ENCODE measurements at regions of chr16 and their contacts with region 1.

Region 1: GRCh38 chr16:87636072-87636684 is 33.9 kb downstream of the JPH3 start:
- DNase-seq: peak; percentile 65 to 67
- H3K4me3 ChIP-seq: no peak overlapping the region
- H3K27ac ChIP-seq: no peak overlapping the region
- H3K4me1 ChIP-seq: peaks cover 0 to 6% of the 10 kb centered on the region in 2 donors
- H3K27me3 ChIP-seq: no peaks in the 10 kb centered on the region
- CTCF ChIP-seq: peak; percentile 62 to 73 (median 66)
- POLR2A ChIP-seq: no peak

Region 2: GRCh38 chr16:87416826-87417527 is 219.2 kb before region 1 on chr16:
- intact Hi-C with region 1: loop called (anchors 5 kb)
- DNase-seq: peak; percentile 47 to 56
- H3K4me3 ChIP-seq: no peak overlapping the region
- H3K27ac ChIP-seq: no peak overlapping the region
- H3K4me1 ChIP-seq: no peaks in the 10 kb centered on the region
- H3K27me3 ChIP-seq: no peaks in the 10 kb centered on the region
- CTCF ChIP-seq: peak; percentile 57 to 71 (median 64)
- POLR2A ChIP-seq: no peak

Region 3: GRCh38 chr16:87492721-87493607 is 143.2 kb before region 1 on chr16 and contains the start of gene ZCCHC14:
- intact Hi-C with region 1: no loop called
- DNase-seq: peak; percentile 99
- H3K4me3 ChIP-seq: peak within 1 kb of the TSS; percentile 32 to 45
- H3K27ac ChIP-seq: peak within 1 kb of the TSS; percentile 58 to 84
- H3K4me1 ChIP-seq: peaks cover 0 to 8% of the 10 kb centered on the region in 2 donors
- H3K27me3 ChIP-seq: no peaks in the 10 kb centered on the region
- CTCF ChIP-seq: peak in 1 of 4 experiments; percentile 21
- POLR2A ChIP-seq: peak; percentile 92 to 95
- total RNA-seq, gene ZCCHC14: 9.2 to 33.0 (median 20.6) TPM

Region 4: GRCh38 chr16:87515475-87516330 is 120.5 kb before region 1 on chr16:
- intact Hi-C with region 1: no loop called
- DNase-seq: no peak
- H3K4me3 ChIP-seq: no peak overlapping the region
- H3K27ac ChIP-seq: no peak overlapping the region
- H3K4me1 ChIP-seq: no peaks in the 10 kb centered on the region
- H3K27me3 ChIP-seq: no peaks in the 10 kb centered on the region
- CTCF ChIP-seq: no peak
- POLR2A ChIP-seq: no peak

Region 5: GRCh38 chr16:87550496-87550961 is 85.6 kb before region 1 on chr16:
- intact Hi-C with region 1: loop called (anchors 5 kb)
- DNase-seq: peak in 1 of 2 donors; percentile 40
- H3K4me3 ChIP-seq: no peak overlapping the region
- H3K27ac ChIP-seq: no peak overlapping the region
- H3K4me1 ChIP-seq: no peaks in the 10 kb centered on the region
- H3K27me3 ChIP-seq: no peaks in the 10 kb centered on the region
- CTCF ChIP-seq: peak; percentile 75 to 87 (median 83)
- POLR2A ChIP-seq: no peak

Region 6: GRCh38 chr16:87681981-87682570 is 45.9 kb after region 1 on chr16:
- intact Hi-C with region 1: no loop called
- DNase-seq: no peak
- H3K4me3 ChIP-seq: no peak overlapping the region
- H3K27ac ChIP-seq: no peak overlapping the region
- H3K4me1 ChIP-seq: no peaks in the 10 kb centered on the region
- H3K27me3 ChIP-seq: no peaks in the 10 kb centered on the region
- CTCF ChIP-seq: no peak
- POLR2A ChIP-seq: no peak

Measured in uterus (tissue), 4 donors.